ENCODE measurements at regions of chr11 and their contacts with region 1.

Region 1: DNA sequence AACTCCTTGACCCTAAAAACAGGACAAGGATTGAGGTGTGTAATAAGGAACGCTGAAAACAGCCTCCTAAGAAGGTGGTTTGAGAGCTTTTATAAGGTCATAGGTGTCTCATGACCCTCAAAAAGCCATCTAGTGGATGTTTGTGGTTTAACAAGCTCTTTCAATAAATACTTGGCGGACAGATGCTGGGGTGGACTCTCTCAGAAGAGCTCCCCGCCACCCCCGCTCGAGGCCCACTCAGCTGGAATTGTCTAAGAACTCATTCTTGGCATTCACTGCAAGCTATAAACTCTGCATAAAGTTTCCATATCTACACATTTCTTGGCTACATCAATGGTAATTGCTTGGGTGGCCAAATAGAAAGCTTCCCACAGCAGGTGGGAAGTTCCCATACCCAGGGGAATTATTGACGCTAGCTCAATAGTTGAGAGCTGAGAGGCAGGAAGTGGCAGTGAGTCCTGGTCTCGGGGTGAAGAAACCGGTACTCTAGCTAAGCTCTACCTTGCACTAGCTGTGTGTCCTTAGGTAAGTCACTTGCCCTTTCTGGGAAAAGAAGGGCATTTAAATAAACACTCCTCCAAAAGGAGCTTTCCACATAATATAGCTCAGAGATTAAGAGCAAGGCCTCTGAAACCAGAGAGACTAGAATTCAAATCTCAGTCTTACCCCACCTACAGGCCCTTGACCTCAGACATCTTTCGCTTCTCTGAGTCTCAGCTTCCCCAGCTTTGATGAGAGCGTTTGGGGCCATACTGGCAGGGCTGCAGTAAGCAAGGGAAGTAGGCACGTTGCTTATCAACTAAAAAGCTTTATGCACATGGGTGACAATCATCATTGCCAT is 6.4 kb downstream of the MS4A15 start:
- DNase-seq: peak; percentile 94
- ATAC-seq: peak; percentile 82
- H3K4me3 ChIP-seq: peak overlapping the region; percentile 0; the same call in 1 of the 2 replicates
- H3K27ac ChIP-seq: peak overlapping the region; percentile 96
- H3K4me1 ChIP-seq: peaks cover 61% of the 10 kb centered on the region
- H3K27me3 ChIP-seq: no peaks in the 10 kb centered on the region
- CTCF ChIP-seq: peak; percentile 35 to 64 (median 54); a peak in 5 of 6 replicates
- EP300 ChIP-seq: peak; percentile 70 to 79; a peak in 3 of 4 replicates
- POLR2A ChIP-seq: no peak; the same call in 1 of the 2 replicates
- RAD21 ChIP-seq: peak; percentile 36; the same call in 1 of the 2 replicates

Region 2: DNA sequence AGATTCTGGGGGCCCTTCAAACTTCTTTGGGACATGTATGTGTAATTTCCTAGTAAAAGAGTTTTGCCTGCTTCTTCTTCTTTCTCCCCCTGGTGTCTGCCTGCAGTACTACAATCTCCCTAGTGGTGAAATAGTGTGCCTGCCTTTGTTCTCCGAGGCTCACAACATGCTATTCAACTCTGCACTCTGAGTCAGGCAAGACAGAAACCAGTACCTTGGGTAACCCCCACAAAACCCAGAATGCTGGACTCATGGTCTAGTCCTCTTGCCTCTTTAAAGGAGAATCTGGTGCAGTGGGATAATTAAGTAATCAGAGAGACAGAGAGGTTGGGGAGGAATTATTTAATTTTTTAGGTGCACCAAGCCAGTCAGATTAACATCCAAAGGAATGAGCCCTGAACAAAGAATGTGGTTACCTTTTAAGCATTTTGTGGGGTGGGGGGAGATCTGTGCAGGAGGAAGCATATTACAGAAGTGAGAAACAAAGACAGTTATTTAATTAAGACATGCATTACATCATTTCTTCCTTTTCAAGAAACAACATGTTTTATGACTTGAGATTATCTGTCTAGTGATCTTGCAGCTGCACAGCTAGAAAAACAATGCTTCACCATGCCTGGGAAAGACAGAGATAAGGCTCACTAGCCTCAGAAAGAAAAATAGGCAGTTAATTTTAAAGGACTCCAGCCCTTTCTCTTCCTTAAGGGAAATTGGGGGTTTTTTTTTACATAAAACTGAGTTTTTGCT is 569.2 kb before region 1 on chr11:
- CTCF ChIA-PET with region 1: interaction called, 3 read pairs
- POLR2A ChIA-PET with region 1: no interaction called
- RAD21 ChIA-PET with region 1: no interaction called
- SMC1A ChIA-PET with region 1: no interaction called
- in situ Hi-C with region 1: no loop called
- intact Hi-C with region 1: loop called (anchors 10 kb)
- DNase-seq: peak; percentile 80
- ATAC-seq: peak; percentile 99
- H3K4me3 ChIP-seq: 0 out of 2 replicates have a peak overlapping the region, but pooled peaks have one; percentile 28
- H3K27ac ChIP-seq: peak overlapping the region; percentile 70
- H3K4me1 ChIP-seq: peaks cover 24% of the 10 kb centered on the region
- H3K27me3 ChIP-seq: no peaks in the 10 kb centered on the region
- CTCF ChIP-seq: peak; percentile 82 to 96 (median 94)
- EP300 ChIP-seq: peak; percentile 40 to 47; a peak in 2 of 4 replicates
- POLR2A ChIP-seq: no peak
- RAD21 ChIP-seq: peak; percentile 76

Region 3: DNA sequence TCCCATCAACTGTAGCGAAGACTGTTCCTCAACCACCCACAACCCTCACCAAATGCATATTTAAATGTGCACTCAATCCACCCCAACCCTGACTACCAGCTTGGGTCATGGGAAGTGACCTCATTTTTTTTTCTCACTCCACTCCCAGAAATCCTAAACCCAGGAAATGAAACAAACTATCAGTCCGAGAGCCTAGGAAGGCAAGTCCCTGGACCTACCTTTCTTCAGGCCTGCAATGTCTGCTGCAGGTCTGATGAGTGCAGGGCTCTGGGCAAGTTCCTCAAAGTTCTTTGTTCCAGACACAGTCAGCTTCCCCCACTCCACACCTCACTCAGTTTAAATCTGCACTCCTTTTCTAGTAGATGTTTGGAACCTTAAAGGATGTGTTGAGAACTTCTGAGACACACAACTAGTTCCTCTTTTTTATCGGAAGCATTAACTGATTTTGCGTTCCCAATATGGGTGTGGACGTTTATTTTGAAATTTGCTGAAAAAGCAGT is 520.3 kb before region 1 on chr11 and contains the start of gene MS4A4E:
- CTCF ChIA-PET with region 1: no interaction called
- POLR2A ChIA-PET with region 1: no interaction called
- RAD21 ChIA-PET with region 1: no interaction called
- SMC1A ChIA-PET with region 1: no interaction called
- in situ Hi-C with region 1: no loop called
- intact Hi-C with region 1: no loop called
- DNase-seq: no peak
- ATAC-seq: no peak; the same call in 2 of the 3 replicates
- H3K4me3 ChIP-seq: no peak within 1 kb of the TSS
- H3K27ac ChIP-seq: no peak within 1 kb of the TSS
- H3K4me1 ChIP-seq: no peaks in the 10 kb centered on the region
- H3K27me3 ChIP-seq: no peaks in the 10 kb centered on the region
- CTCF ChIP-seq: no peak
- EP300 ChIP-seq: no peak
- POLR2A ChIP-seq: no peak
- RAD21 ChIP-seq: no peak
- polyA plus RNA-seq, gene MS4A4E: 0.22 to 0.45 TPM

Region 4: GRCh38 chr11:60363542-60364510 is 399.2 kb before region 1 on chr11:
- CTCF ChIA-PET with region 1: interaction called, 4 read pairs
- POLR2A ChIA-PET with region 1: no interaction called
- RAD21 ChIA-PET with region 1: interaction called, 9 read pairs
- SMC1A ChIA-PET with region 1: interaction called, 4 read pairs
- in situ Hi-C with region 1: loop called (anchors 10 kb)
- intact Hi-C with region 1: no loop called
- DNase-seq: peak; percentile 88
- ATAC-seq: peak; percentile 92
- H3K4me3 ChIP-seq: peak overlapping the region; percentile 52; the same call in 1 of the 2 replicates
- H3K27ac ChIP-seq: peak overlapping the region; percentile 36
- H3K4me1 ChIP-seq: peaks cover 14% of the 10 kb centered on the region; the same call in 1 of the 2 replicates
- H3K27me3 ChIP-seq: no peaks in the 10 kb centered on the region
- CTCF ChIP-seq: peak; percentile 63 to 92 (median 78); a peak in 5 of 6 replicates
- EP300 ChIP-seq: no peak
- POLR2A ChIP-seq: no peak
- RAD21 ChIP-seq: peak; percentile 95

Region 5: DNA sequence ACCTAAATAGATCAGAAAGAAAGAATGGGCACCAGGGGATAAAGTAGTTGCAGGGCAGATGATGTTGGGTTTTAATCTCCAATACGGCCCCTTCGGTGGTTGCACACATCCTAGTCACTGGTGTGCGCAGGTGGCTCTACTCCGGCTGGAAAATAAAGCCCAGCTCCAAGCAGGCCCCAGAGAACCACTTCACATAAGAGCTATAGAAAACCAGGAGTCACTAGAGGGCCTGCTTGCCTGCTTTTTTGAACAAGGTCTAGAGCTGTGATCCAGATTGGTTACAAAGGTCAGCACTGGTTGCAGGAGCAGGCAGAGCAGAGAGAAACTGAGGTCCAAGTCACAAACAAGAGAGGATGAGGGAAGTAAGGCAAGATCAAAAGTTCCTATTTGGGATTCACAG is 105.2 kb before region 1 on chr11:
- CTCF ChIA-PET with region 1: interaction called, 30 read pairs
- POLR2A ChIA-PET with region 1: no interaction called
- RAD21 ChIA-PET with region 1: interaction called, 15 read pairs
- SMC1A ChIA-PET with region 1: interaction called, 9 read pairs
- in situ Hi-C with region 1: no loop called
- intact Hi-C with region 1: no loop called
- DNase-seq: no peak
- ATAC-seq: peak; percentile 53; the same call in 2 of the 3 replicates
- H3K4me3 ChIP-seq: no peak overlapping the region
- H3K27ac ChIP-seq: no peak overlapping the region
- H3K4me1 ChIP-seq: no peaks in the 10 kb centered on the region
- H3K27me3 ChIP-seq: no peaks in the 10 kb centered on the region
- CTCF ChIP-seq: peak in 2 of 3 experiments; percentile 14 to 33; a peak in 2 of 6 replicates
- EP300 ChIP-seq: no peak
- POLR2A ChIP-seq: no peak
- RAD21 ChIP-seq: peak; percentile 47

Region 6: DNA sequence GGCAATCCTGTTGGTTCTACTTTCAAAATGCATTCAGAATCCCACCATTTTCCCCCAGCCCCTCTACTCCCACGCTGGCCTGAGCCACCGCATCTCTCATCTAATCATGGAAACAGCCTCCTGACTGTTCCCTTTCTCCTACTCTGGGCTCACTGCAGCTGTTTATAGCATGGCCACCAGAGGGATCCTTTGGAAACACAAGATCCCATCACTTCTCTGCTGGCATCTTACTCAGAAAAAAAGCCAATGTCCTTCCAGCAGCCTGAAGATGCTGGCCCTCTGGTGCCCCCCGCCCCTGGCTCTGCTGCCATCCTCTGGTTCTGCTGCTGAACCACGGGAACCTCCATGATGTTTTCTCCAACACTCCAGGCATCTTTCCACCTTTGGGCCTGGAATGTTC is 52.6 kb before region 1 on chr11:
- CTCF ChIA-PET with region 1: interaction called, 8 read pairs
- POLR2A ChIA-PET with region 1: interaction called, 4 read pairs
- RAD21 ChIA-PET with region 1: interaction called, 4 read pairs
- SMC1A ChIA-PET with region 1: interaction called, 20 read pairs
- in situ Hi-C with region 1: no loop called
- intact Hi-C with region 1: no loop called
- DNase-seq: no peak
- ATAC-seq: no peak
- H3K4me3 ChIP-seq: no peak overlapping the region
- H3K27ac ChIP-seq: no peak overlapping the region
- H3K4me1 ChIP-seq: no peaks in the 10 kb centered on the region
- H3K27me3 ChIP-seq: no peaks in the 10 kb centered on the region
- CTCF ChIP-seq: no peak
- EP300 ChIP-seq: no peak
- POLR2A ChIP-seq: no peak
- RAD21 ChIP-seq: no peak

Region 7: DNA sequence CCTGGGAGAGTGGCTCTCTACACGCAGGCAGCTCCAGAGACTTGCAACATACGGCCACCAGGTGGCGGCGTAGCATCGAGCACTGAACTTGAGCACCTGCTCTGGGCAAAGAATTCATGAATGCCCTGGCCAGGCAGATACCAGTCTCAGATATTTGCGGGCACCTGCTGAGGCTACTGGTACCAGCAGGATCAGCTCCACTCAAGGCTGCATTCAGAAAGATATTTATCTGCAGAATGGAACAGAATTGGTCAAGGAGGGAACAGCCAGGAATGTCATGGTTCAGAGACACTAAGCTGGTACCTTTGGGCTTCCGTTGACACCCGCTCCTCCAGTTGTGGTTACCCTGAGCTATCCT is 68.1 kb after region 1 on chr11:
- CTCF ChIA-PET with region 1: interaction called, 9 read pairs
- POLR2A ChIA-PET with region 1: no interaction called
- RAD21 ChIA-PET with region 1: interaction called, 19 read pairs
- SMC1A ChIA-PET with region 1: no interaction called
- in situ Hi-C with region 1: no loop called
- intact Hi-C with region 1: no loop called
- DNase-seq: peak; percentile 26
- ATAC-seq: peak; percentile 98
- H3K4me3 ChIP-seq: no peak overlapping the region
- H3K27ac ChIP-seq: no peak overlapping the region
- H3K4me1 ChIP-seq: no peaks in the 10 kb centered on the region; the same call in 1 of the 2 replicates
- H3K27me3 ChIP-seq: no peaks in the 10 kb centered on the region; a peak in 2 of 4 replicates
- CTCF ChIP-seq: peak; percentile 94 to 95 (median 95)
- EP300 ChIP-seq: no peak
- POLR2A ChIP-seq: no peak
- RAD21 ChIP-seq: peak; percentile 96

Region 8: DNA sequence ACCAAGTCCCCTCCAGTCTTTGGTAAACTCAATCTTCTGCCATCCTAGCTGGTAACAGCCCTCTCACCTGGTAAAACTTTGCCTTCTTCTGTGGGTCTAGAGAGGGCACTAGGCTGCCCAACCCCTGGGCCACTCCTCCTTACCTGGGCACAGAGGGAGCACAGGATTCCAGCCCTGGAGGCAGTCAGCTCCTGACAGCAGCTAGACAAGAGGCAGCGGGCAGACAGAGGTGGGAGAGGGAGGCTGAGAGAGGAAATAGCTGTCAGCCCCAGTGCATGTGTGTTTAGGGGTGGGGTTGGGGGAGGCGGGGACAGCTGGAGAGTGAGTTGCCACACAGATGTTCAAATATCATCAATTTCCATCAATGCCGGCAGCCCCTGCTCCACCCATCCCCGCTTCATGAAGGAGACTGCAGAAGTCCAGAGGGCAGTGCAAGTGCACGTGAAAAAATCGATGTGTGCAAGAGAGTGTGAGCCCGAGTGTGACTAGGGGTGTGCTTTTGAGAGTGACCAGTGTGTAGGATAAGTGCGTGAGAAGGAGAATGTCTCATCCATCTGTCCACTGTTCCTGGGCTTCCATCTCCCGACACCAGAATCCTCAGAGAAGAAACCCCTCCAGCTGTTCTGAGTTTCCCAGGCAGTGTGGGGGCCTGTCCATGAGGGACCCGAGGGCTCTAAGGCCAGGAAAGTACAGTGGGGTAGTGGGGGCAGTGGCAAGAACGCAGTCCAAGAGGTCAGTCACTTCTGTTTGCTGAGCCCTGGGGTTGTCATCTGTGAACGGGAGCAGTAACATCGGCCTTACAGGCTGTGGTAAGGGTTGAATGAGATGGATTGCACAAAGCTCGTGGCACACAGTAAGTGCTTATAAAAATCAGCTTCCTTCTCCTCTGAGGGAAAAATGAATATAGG is 92.9 kb after region 1 on chr11 and contains the start of gene PTGDR2:
- CTCF ChIA-PET with region 1: no interaction called
- POLR2A ChIA-PET with region 1: no interaction called
- RAD21 ChIA-PET with region 1: no interaction called
- SMC1A ChIA-PET with region 1: no interaction called
- in situ Hi-C with region 1: no loop called
- intact Hi-C with region 1: no loop called
- DNase-seq: no peak
- ATAC-seq: no peak
- H3K4me3 ChIP-seq: no peak within 1 kb of the TSS
- H3K27ac ChIP-seq: no peak within 1 kb of the TSS
- H3K4me1 ChIP-seq: 0 out of 2 replicates have a peak, but pooled peaks cover 3% of the 10 kb centered on the region
- H3K27me3 ChIP-seq: no peaks in the 10 kb centered on the region
- CTCF ChIP-seq: no peak
- EP300 ChIP-seq: no peak
- POLR2A ChIP-seq: no peak
- RAD21 ChIP-seq: no peak
- polyA plus RNA-seq, gene PTGDR2: not detected

Region 9: GRCh38 chr11:60880643-60881282 is 117.7 kb after region 1 on chr11:
- CTCF ChIA-PET with region 1: no interaction called
- POLR2A ChIA-PET with region 1: no interaction called
- RAD21 ChIA-PET with region 1: no interaction called
- SMC1A ChIA-PET with region 1: no interaction called
- in situ Hi-C with region 1: no loop called
- intact Hi-C with region 1: no loop called
- DNase-seq: no peak
- ATAC-seq: no peak
- H3K4me3 ChIP-seq: no peak overlapping the region
- H3K27ac ChIP-seq: no peak overlapping the region
- H3K4me1 ChIP-seq: no peaks in the 10 kb centered on the region
- H3K27me3 ChIP-seq: no peaks in the 10 kb centered on the region
- CTCF ChIP-seq: no peak
- EP300 ChIP-seq: no peak
- POLR2A ChIP-seq: no peak
- RAD21 ChIP-seq: no peak

Region 10: GRCh38 chr11:61041755-61042518 is 278.9 kb after region 1 on chr11:
- CTCF ChIA-PET with region 1: interaction called, 10 read pairs
- POLR2A ChIA-PET with region 1: interaction called, 3 read pairs
- RAD21 ChIA-PET with region 1: interaction called, 4 read pairs
- SMC1A ChIA-PET with region 1: interaction called, 7 read pairs
- in situ Hi-C with region 1: no loop called
- intact Hi-C with region 1: no loop called
- DNase-seq: no peak
- ATAC-seq: peak; percentile 89
- H3K4me3 ChIP-seq: peak overlapping the region; percentile 51; the same call in 1 of the 2 replicates
- H3K27ac ChIP-seq: peak overlapping the region; percentile 77
- H3K4me1 ChIP-seq: peaks cover 15% of the 10 kb centered on the region
- H3K27me3 ChIP-seq: no peaks in the 10 kb centered on the region
- CTCF ChIP-seq: no peak
- EP300 ChIP-seq: peak in 1 of 2 experiments; percentile 26; a peak in 2 of 4 replicates
- POLR2A ChIP-seq: peak; percentile 79
- RAD21 ChIP-seq: no peak; the same call in 1 of the 2 replicates

Measured in GM12878 (cell line).